ENCODE measurements at regions of chr12 and their contacts with region 1.

Region 1: DNA sequence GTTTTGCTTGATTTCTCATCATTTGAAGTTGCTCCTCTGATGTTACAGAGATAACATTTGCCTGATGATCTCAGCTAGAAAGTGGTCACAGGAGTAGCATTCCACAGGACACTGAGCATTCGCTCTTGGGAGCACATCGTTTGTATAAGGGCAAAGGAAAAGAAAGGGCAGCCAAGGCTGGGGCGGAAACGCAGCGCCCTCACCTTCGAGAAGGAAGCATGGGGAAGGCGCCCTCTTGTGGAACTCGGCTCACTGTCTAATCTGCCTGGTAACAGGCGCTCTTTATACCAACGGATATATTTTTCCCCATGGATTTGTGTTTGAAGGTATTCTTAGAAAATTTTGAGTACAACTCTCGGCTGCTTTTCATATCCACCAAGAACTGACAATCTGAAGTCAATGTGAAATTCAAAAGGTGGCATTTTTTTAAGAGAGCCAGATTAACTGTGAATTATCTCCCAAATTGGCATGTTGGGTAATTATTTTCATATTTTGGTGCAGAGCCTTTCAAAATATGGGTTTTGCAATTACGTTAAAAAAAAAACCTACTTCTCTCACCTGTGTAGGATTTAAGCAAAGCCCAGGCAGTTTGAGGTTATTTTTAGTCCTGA is 172.7 kb downstream of the CAND1 start:
- DNase-seq: peak; percentile 71 to 80
- ATAC-seq: peak; percentile 97 to 100
- H3K4me3 ChIP-seq: no peak overlapping the region
- H3K27ac ChIP-seq: no peak overlapping the region
- H3K4me1 ChIP-seq: no peaks in the 10 kb centered on the region
- CTCF ChIP-seq: peak; percentile 76
- EP300 ChIP-seq: no peak
- POLR2A ChIP-seq: no peak
- RAD21 ChIP-seq: peak; percentile 75 to 79

Region 2: GRCh38 chr12:67355578-67356379 is 86.1 kb before region 1 on chr12:
- CTCF ChIA-PET with region 1: interaction called, 20 read pairs
- POLR2A ChIA-PET with region 1: no interaction called
- DNase-seq: peak in 1 of 2 experiments; percentile 54
- ATAC-seq: peak; percentile 39 to 73; a peak in 4 of 6 replicates
- H3K4me3 ChIP-seq: no peak overlapping the region
- H3K27ac ChIP-seq: no peak overlapping the region
- H3K4me1 ChIP-seq: no peaks in the 10 kb centered on the region
- CTCF ChIP-seq: peak; percentile 81
- EP300 ChIP-seq: no peak
- POLR2A ChIP-seq: no peak
- RAD21 ChIP-seq: peak; percentile 75 to 81

Region 3: GRCh38 chr12:67452119-67452805 is 10.4 kb after region 1 on chr12:
- CTCF ChIA-PET with region 1: interaction called, 10 read pairs
- POLR2A ChIA-PET with region 1: no interaction called
- DNase-seq: no peak
- ATAC-seq: no peak
- H3K4me3 ChIP-seq: no peak overlapping the region
- H3K27ac ChIP-seq: no peak overlapping the region
- H3K4me1 ChIP-seq: no peaks in the 10 kb centered on the region
- CTCF ChIP-seq: no peak
- EP300 ChIP-seq: no peak
- POLR2A ChIP-seq: no peak
- RAD21 ChIP-seq: no peak